HepG2 (cell line): ENCODE measurements at regions of chr2 and their contacts with region 1.

Region 1: DNA sequence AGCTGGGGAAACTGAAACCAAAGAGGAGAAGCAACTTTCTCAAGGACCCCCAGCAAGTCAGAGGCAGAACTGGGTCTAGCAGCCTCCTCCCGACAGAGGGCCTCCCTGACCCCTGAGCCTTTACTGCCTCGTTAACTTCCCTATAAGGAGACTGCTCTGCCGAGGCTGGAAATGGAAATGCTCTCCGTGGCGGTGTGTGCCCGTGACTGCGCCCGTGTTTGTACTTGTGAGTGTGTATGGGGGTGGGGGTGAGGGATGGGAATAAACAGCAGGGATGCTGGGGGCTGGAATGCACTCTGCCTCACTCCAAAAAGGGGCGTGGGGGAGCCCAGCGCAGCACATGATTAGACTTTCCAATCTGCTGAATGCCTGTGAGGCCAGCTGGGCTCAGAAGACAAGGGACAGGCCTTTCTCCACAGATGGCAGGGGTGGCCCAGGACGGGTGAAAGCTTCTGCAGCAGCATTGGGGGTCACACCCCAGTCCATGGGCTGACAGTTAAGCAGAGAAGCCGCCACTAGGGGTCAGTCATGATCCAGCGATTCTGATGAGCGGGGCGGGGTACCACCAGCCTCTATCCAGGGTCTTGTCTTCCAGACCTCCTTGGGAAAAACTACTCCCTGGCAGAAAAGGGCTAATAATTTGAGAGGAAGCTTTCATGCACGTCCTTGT is 26.8 kb downstream of the MPHOSPH10 start:
- DNase-seq: peak; percentile 41
- ATAC-seq: peak; percentile 69
- H3K4me3 ChIP-seq: no peak overlapping the region
- H3K27ac ChIP-seq: no peak overlapping the region
- H3K4me1 ChIP-seq: no peaks in the 10 kb centered on the region
- H3K27me3 ChIP-seq: peaks cover 0 to 26% of the 10 kb centered on the region in 2 experiments; a peak in 3 of 5 replicates
- CTCF ChIP-seq: peak; percentile 83
- EP300 ChIP-seq: no peak
- POLR2A ChIP-seq: no peak
- RAD21 ChIP-seq: peak; percentile 70

Region 2: DNA sequence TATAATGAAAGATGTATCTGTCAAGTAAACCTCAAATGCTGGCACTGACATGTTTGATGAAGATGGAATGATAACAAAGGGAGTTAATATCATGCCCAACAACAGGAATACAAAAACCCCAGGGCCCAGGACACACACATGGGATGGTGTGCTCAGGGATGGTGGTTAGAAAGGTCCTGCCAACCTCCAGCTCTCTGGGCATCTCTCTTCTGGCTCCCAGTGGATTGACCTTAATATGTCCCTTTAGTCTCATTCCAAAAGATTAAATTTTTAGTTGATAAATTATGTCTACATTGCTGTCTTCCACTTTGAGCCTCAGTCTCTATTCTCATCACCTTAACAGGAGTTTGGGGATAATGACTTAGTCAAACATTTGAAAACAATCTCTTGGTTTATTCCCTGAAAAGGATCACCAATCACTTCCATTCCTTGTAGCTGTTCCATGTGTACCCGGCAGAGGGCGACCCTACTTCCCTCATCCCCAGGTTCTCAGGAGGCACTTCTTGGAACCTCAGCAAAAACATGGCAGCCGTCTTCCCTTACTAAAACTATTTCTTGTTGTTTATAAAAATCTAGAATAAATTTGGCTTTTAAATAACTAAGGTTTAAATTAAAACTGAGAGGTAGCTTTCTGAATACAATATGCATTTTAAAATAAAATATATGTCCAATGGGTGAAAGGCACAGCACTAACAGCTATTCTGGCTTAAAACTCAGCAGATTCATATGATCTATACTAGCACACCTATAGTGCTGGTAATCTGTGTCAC is 56.9 kb before region 1 on chr2:
- CTCF ChIA-PET with region 1: interaction called, 24 read pairs
- POLR2A ChIA-PET with region 1: interaction called, 3 read pairs
- in situ Hi-C with region 1: loop called (anchors 5 kb)
- intact Hi-C with region 1: loop called (anchors 1 kb)
- DNase-seq: peak; percentile 57
- ATAC-seq: peak; percentile 76
- H3K4me3 ChIP-seq: no peak overlapping the region
- H3K27ac ChIP-seq: no peak overlapping the region
- H3K4me1 ChIP-seq: peaks cover 45% of the 10 kb centered on the region
- H3K27me3 ChIP-seq: 0 out of 5 replicates have a peak, but pooled peaks cover 0 to 7% of the 10 kb centered on the region in 2 experiments
- CTCF ChIP-seq: peak; percentile 83
- EP300 ChIP-seq: no peak
- POLR2A ChIP-seq: no peak
- RAD21 ChIP-seq: peak; percentile 72

Region 3: DNA sequence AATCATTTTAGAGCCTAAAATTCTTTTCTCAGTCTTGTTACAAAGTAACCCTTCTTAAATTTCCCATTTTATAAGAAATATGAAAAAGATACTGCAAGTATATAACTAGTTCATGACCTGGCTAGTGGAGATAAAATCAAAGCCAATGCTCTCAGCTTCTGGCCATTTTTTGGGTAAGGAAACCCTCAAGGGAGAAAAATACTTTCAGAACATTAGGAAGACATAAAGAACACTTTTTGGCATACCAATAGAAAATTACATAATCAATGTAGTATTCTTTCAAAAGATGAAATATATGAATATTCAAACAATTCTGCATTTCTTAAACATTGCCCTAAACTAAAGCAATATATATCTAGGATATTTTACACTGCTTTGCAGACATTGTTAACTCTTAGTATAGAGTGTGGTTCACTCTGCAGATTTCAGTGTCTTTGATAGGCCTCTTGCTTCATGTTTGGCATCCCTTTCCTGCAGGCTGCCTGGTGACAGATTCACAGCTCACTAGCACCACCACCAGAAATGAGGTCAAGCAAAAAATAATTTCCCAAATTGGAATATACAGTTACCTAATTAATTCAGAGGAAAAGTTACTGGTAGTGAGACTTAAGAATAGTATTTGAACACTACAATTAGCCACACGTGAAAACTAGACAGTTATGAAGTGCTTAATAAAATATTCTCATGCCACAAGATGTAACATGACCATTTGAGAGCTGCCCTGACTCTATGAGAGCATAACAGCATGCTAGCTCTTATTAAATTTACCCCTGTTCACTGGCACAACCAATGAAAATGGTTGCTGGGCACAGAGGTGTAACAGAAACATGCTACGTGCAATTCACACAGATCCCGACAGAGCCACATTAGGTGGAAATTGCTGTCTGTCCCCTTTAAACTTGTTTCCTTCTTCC is 33.7 kb after region 1 on chr2:
- CTCF ChIA-PET with region 1: no interaction called
- POLR2A ChIA-PET with region 1: no interaction called
- in situ Hi-C with region 1: no loop called
- intact Hi-C with region 1: no loop called
- DNase-seq: peak; percentile 13
- ATAC-seq: peak; percentile 71
- H3K4me3 ChIP-seq: no peak overlapping the region
- H3K27ac ChIP-seq: no peak overlapping the region
- H3K4me1 ChIP-seq: no peaks in the 10 kb centered on the region
- H3K27me3 ChIP-seq: 0 out of 5 replicates have a peak, but pooled peaks cover 0 to 3% of the 10 kb centered on the region in 2 experiments
- CTCF ChIP-seq: peak; percentile 51
- EP300 ChIP-seq: no peak
- POLR2A ChIP-seq: no peak
- RAD21 ChIP-seq: no peak

Region 4: GRCh38 chr2:71282495-71282894 is 125.2 kb after region 1 on chr2:
- CTCF ChIA-PET with region 1: interaction called, 6 read pairs
- POLR2A ChIA-PET with region 1: no interaction called
- in situ Hi-C with region 1: no loop called
- intact Hi-C with region 1: loop called (anchors 5 kb)
- DNase-seq: peak; percentile 45
- ATAC-seq: peak; percentile 93
- H3K4me3 ChIP-seq: no peak overlapping the region
- H3K27ac ChIP-seq: no peak overlapping the region
- H3K4me1 ChIP-seq: peaks cover 3% of the 10 kb centered on the region; the same call in 1 of the 2 replicates
- H3K27me3 ChIP-seq: peaks cover 2 to 38% of the 10 kb centered on the region in 2 experiments
- CTCF ChIP-seq: peak; percentile 66
- EP300 ChIP-seq: no peak
- POLR2A ChIP-seq: no peak
- RAD21 ChIP-seq: no peak